Upper lobe of right lung (tissue), 1 donor: ENCODE measurements at regions of chr17 and their contacts with region 1.

Region 1: DNA sequence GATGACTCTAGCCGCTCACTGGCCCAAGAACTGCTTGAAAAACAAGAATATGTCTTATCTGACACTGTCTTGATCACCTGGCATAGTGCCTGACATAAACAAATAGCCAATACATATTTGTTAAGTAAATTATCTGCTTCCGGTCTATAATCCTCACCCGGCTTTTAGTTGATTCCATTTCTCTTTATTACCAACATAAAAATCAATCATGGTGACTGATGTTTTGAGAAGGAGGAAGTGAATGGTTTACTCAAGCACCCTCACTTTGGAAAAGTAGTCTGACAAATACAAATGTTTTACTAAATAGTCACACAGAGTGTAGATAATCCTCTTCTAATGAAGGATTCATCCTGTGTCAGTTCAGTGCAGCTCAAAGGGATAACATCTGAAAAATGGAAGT is 47.0 kb downstream of the SKAP1 start:
- DNase-seq: no peak
- ATAC-seq: no peak
- H3K4me3 ChIP-seq: no peak overlapping the region
- H3K27ac ChIP-seq: no peak overlapping the region
- H3K4me1 ChIP-seq: no peaks in the 10 kb centered on the region
- H3K27me3 ChIP-seq: peaks cover 50% of the 10 kb centered on the region
- CTCF ChIP-seq: no peak

Region 2: DNA sequence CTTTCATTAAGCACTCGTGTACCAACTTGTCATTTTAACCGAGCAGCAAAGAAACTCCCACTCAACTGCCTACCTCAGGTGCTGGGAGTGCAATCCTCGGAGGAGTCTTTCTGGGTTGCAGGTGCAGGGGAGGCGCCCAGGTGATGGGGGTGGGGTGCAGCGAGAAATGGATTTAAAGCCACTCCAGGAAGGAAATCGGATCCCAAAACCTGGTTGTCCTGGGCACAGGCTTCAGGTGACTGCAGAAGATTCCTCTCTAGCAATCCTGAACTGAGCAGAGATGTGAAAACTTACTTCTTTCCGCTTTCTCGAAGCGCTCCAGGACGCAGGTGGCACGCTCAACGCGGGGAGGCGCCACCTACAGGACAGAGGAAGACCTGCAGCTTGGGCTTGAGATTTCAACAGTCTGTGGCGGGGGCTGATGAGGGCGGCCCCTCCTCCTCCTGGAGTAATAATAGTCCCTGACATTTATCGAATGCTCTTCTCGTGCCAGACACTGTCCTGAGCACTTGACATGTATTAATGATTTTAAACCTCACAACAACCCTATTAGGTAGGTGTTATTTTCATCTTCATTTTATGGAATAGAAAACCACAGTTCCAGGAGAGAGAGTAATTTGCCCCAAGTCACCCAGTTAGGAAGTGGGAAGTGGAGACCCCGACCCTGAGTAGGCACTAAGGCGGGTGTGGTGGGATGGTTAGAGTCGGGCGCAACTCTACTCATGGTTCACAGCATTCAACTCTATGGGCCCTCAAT is 74.3 kb after region 1 on chr17:
- intact Hi-C with region 1: loop called (anchors 10 kb)
- DNase-seq: peak; percentile 79
- ATAC-seq: peak; percentile 97
- H3K4me3 ChIP-seq: no peak overlapping the region
- H3K27ac ChIP-seq: no peak overlapping the region
- H3K4me1 ChIP-seq: no peaks in the 10 kb centered on the region
- H3K27me3 ChIP-seq: peaks cover 17% of the 10 kb centered on the region
- CTCF ChIP-seq: peak; percentile 98